ENCODE measurements at regions of chr7 and their contacts with region 1.

Region 1: DNA sequence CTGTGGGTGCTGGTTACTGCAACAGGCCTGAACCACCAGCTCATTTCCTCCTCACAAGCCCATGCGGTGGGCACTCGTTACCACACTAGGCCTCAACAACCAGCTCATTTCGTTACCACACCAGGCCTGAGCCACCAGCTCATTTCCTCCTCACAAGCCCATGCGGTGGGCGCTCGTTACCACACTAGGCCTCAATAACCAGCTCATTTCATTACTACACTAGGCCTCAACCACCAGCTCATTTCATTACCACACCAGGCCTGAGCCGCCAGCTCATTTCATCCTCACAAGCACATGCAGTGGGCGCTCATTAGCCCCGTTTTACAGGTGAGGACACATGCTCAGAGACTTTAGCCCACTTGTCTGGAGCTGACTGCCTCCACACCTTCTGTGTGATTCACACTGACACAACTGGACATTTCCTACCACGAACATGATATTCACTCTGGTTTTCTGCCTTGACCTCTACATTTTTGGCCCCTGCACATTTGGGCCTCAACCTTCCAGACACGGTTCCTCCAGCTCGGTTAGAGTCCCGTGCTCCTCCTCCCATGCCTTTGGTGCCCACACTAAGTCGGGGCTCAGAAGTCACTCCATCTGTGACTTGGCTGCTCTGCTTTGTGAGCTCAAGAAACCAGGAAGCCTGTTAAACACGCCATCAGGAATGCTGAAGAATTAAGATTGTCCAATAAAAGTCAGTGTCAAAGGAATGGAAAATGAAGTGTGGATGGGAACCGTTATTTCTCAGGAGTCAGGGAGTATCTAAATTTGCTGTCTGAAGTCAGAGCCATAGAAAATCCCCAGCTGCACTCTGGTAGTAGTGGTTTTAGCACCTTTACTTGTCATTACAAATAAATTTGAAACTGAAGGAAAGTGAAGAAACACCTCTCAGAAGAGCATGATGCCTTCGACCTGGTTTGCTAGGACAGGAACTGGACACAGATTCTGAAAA is 55.8 kb upstream of the LANCL2 start:
- DNase-seq: peak; percentile 95
- H3K4me3 Mint-ChIP-seq: peak overlapping the region; percentile 16
- H3K27ac Mint-ChIP-seq: peak overlapping the region; percentile 90
- H3K4me1 Mint-ChIP-seq: peaks cover 43% of the 10 kb centered on the region
- H3K27me3 Mint-ChIP-seq: peaks cover 25% of the 10 kb centered on the region

Region 2: GRCh38 chr7:54773472-54774399 is 535.6 kb before region 1 on chr7:
- CTCF ChIA-PET with region 1: no interaction called
- POLR2A ChIA-PET with region 1: no interaction called
- intact Hi-C with region 1: no loop called
- DNase-seq: peak; percentile 80
- H3K4me3 Mint-ChIP-seq: peak overlapping the region; percentile 64
- H3K27ac Mint-ChIP-seq: no peak overlapping the region
- H3K4me1 Mint-ChIP-seq: peaks cover 5% of the 10 kb centered on the region
- H3K27me3 Mint-ChIP-seq: peaks cover 9% of the 10 kb centered on the region

Region 3: GRCh38 chr7:55348499-55348898 is 39.2 kb after region 1 on chr7:
- CTCF ChIA-PET with region 1: interaction called, 4 read pairs
- POLR2A ChIA-PET with region 1: interaction called, 9 read pairs
- intact Hi-C with region 1: loop called (anchors 1 kb)
- DNase-seq: no peak
- H3K4me3 Mint-ChIP-seq: no peak overlapping the region
- H3K27ac Mint-ChIP-seq: no peak overlapping the region
- H3K4me1 Mint-ChIP-seq: peaks cover 10% of the 10 kb centered on the region
- H3K27me3 Mint-ChIP-seq: peaks cover 20% of the 10 kb centered on the region

Region 4: DNA sequence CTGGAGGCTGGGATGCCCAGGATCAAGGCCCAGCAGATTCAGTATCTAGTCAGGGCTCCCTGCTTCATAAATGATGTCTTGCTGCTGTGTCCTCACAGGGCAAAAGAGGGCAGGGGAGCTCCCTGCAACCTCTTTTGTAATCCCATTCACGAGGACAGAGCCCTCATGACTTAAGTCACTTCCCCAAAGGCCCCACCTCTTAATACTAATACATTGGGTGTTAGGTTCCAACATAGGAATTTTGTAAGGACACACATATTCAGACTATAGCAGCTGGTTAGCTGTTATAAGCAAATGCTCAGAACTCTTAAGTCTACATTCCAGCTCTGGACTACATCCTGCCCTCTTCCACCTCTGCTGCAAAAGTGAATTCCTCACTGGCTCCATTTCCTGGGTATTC is 200.0 kb after region 1 on chr7:
- CTCF ChIA-PET with region 1: no interaction called
- POLR2A ChIA-PET with region 1: interaction called, 4 read pairs
- intact Hi-C with region 1: loop called (anchors 1 kb)
- DNase-seq: no peak
- H3K4me3 Mint-ChIP-seq: no peak overlapping the region
- H3K27ac Mint-ChIP-seq: peak overlapping the region; percentile 45
- H3K4me1 Mint-ChIP-seq: peaks cover 79% of the 10 kb centered on the region
- H3K27me3 Mint-ChIP-seq: no peaks in the 10 kb centered on the region